ENCODE measurements at regions of chr1 and their contacts with region 1.

Region 1: DNA sequence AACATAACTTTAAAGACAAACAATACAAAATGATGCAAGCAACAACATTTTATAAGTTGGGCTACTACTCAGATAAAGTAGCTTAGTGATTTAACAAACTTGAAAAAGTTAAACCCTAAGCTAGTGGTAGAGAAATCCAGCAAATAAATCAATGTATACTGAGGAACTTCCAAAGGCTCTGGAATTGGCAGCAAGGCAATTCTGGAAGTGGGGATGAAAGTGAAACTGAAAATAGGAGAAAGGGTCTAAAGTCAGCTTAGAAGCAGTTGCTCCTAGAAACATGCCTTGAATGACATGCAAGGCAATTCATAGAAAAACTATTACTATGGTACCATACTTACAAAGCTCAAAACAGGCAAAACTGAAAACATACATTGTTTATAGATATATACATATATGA is 90.0 kb upstream of the CAMK1G start:
- DNase-seq: peak in 2 of 3 donors; percentile 7 to 13
- H3K4me3 ChIP-seq: no peak overlapping the region
- H3K27ac ChIP-seq: no peak overlapping the region
- H3K4me1 ChIP-seq: no peaks in the 10 kb centered on the region
- H3K27me3 ChIP-seq: no peaks in the 10 kb centered on the region

Region 2: GRCh38 chr1:209473025-209473424 is 20.5 kb before region 1 on chr1:
- CTCF ChIA-PET with region 1: no interaction called
- POLR2A ChIA-PET with region 1: no interaction called
- DNase-seq: no peak
- H3K4me3 ChIP-seq: no peak overlapping the region
- H3K27ac ChIP-seq: no peak overlapping the region
- H3K4me1 ChIP-seq: no peaks in the 10 kb centered on the region
- H3K27me3 ChIP-seq: peaks cover 0 to 3% (median 0%) of the 10 kb centered on the region in 5 experiments

Region 3: GRCh38 chr1:209513226-209513625 is 19.7 kb after region 1 on chr1:
- CTCF ChIA-PET with region 1: interaction called, 17 read pairs
- POLR2A ChIA-PET with region 1: no interaction called
- DNase-seq: peak; percentile 23 to 56 (median 50)
- H3K4me3 ChIP-seq: no peak overlapping the region
- H3K27ac ChIP-seq: no peak overlapping the region
- H3K4me1 ChIP-seq: no peaks in the 10 kb centered on the region
- H3K27me3 ChIP-seq: peaks cover 0 to 2% (median 0%) of the 10 kb centered on the region in 5 experiments